ENCODE measurements at regions of chr1 and their contacts with region 1.

Region 1: GRCh38 chr1:107963601-107964335 is 1.2 kb downstream of the VAV3 start:
- DNase-seq: peak in 4 of 7 donors; percentile 14 to 55 (median 24)
- H3K4me3 ChIP-seq: peak overlapping the region in 3 of 4 donors; percentile 21 to 80 (median 79)
- H3K27ac ChIP-seq: peak overlapping the region in 4 of 5 donors; percentile 45 to 81 (median 66)
- H3K4me1 ChIP-seq: no peaks in the 10 kb centered on the region
- H3K27me3 ChIP-seq: peaks cover 5% of the 10 kb centered on the region
- CTCF ChIP-seq: no peak
- POLR2A ChIP-seq: peak in 1 of 2 donors; percentile 7

Region 2: DNA sequence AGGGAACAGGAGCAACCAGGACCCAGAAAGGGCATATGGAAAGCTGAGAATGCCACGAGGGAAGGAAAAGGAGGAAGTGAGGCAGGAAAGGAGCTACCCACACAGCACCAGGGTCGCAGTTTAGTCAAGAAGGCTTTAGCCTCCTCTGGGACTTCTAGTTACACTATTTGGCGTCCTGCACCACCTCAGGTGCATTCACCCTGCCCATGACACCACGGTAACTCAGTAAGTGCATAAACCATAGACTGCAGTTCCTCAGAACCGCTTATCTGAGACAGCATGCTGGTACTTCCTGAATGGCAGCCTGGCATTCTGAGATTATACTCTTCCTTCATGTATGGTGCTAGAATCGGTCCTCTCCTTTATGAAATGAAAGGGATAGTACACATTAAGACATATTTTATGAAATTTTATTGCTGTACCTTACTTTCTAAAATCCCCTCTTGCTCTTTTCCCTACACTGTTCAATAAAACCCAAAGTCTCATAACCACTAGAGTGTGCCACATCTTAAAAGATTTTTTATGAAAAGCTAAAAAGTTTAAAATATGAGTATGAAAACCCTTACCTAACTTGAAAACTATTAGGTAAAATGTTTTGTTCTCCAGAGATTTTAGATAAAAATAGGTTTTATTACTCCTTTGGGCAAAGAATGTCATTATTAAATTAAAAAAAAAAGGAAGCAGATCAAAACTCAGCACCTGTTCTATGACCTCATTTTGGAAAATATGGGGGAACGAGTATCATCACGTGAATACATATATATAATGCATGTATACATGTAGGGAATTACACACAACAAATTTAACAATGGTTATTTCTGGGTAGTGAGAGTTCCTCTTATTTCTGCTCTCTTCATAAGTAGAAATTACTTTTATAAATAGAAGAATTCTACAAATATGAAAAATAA is 66.1 kb before region 1 on chr1:
- intact Hi-C with region 1: loop called in 1 of 2 experiments (anchors 10 kb)
- DNase-seq: no peak
- H3K4me3 ChIP-seq: no peak overlapping the region
- H3K27ac ChIP-seq: no peak overlapping the region
- H3K4me1 ChIP-seq: no peaks in the 10 kb centered on the region
- H3K27me3 ChIP-seq: no peaks in the 10 kb centered on the region
- CTCF ChIP-seq: no peak
- POLR2A ChIP-seq: no peak

Region 3: GRCh38 chr1:108107658-108108518 is 144.1 kb after region 1 on chr1:
- intact Hi-C with region 1: no loop called
- DNase-seq: no peak
- H3K4me3 ChIP-seq: no peak overlapping the region
- H3K27ac ChIP-seq: no peak overlapping the region
- H3K4me1 ChIP-seq: no peaks in the 10 kb centered on the region
- H3K27me3 ChIP-seq: no peaks in the 10 kb centered on the region
- CTCF ChIP-seq: no peak
- POLR2A ChIP-seq: no peak

Measured in adrenal gland (tissue), 19 donors.